ENCODE measurements at regions of chr9 and their contacts with region 1.

Region 1: DNA sequence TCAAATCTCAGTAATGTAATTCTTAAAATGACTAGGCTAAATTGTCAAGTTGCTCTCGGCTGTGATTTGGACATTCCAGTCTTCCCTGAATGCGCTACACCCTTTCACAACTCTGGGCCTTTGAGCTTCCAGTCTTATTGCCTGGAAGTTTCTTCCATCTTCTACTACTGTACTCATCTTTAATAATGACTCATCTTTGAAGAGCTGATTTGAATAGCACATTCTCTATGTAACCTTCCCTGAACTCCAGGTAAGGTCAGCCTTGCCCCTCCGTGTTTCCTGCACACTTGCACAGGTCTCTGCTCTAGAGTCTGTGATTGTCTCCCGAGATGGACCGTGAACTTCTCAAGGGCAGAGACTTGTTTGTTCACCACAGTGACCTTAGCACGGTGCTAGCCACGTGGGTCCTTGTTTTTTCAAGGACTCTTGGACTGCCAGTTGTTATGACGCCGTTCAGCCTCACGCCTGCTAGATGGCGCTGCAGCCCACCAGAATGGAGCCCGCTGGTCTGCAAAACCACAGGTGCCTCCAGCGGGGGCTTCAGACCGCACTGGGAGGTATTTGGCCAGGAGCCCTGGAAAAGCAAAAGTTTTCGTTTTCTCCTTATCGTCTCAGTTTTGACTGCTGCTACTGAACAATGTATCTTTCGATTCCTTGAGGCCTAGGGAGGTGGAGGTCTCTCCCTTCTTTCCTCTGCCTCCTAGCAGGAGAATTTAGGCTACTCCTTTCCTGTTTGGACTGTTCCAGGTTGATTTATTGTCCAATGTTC is 44.4 kb downstream of the SEC61B start:
- DNase-seq: peak; percentile 77
- H3K4me3 ChIP-seq: no peak overlapping the region
- H3K27ac ChIP-seq: no peak overlapping the region
- H3K4me1 ChIP-seq: peaks cover 4% of the 10 kb centered on the region
- CTCF ChIP-seq: peak; percentile 94

Region 2: DNA sequence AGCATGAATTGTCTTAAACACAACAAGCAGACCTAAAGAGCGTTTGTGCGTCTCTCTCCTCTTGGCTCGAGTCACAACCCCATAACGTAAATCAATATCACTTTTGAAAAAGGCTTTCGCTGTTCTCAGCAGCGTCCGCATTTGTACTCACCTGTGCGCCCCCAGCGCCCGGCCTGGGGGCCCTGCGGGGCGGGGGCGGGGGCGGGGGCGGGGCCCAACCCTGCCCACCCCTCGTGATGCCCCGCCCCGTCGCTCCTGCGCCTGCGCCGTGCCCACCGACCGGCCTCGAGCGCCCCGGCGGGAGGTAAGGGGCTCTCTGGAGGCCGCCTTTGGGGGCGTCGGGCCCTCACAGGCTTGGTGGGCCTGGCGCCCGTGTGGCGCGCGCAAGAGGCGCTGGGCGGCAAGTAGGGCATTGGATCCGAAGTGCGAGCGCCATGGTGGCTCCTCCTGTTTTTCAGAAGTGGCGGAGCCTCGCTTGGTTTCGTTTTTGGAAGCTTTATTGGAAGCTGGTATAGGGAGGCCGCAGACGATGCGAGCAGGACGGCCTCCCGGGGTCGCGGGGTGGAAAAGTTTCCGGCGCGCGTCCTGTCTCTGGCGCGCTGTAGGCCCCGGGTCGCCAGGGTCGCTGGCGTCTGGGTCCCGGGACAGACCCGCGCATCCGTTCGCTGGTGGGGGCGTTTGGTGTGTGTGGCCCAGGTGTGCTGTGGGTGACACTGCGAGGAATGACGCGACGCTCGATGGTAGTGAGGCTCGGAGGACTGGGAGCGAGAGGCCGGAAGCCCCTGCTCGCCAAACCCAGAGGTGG is 640.2 kb after region 1 on chr9 and contains the start of gene STX17:
- CTCF ChIA-PET with region 1: no interaction called
- POLR2A ChIA-PET with region 1: no interaction called
- intact Hi-C with region 1: no loop called
- DNase-seq: peak; percentile 84
- H3K4me3 ChIP-seq: peak within 1 kb of the TSS; percentile 85
- H3K27ac ChIP-seq: peak within 1 kb of the TSS; percentile 52
- H3K4me1 ChIP-seq: peaks cover 8% of the 10 kb centered on the region
- CTCF ChIP-seq: peak; percentile 32; the same call in 1 of the 2 replicates
- total RNA-seq, gene STX17: 12.1 and 12.4 TPM in 2 replicates

Region 3: GRCh38 chr9:99999797-100000196 is 733.4 kb after region 1 on chr9:
- CTCF ChIA-PET with region 1: no interaction called
- POLR2A ChIA-PET with region 1: no interaction called
- intact Hi-C with region 1: loop called (anchors 10 kb)
- DNase-seq: no peak
- H3K4me3 ChIP-seq: no peak overlapping the region
- H3K27ac ChIP-seq: no peak overlapping the region
- H3K4me1 ChIP-seq: no peaks in the 10 kb centered on the region
- CTCF ChIP-seq: no peak

Region 4: GRCh38 chr9:100679834-100680233 is 1413.4 kb after region 1 on chr9:
- CTCF ChIA-PET with region 1: no interaction called
- POLR2A ChIA-PET with region 1: no interaction called
- intact Hi-C with region 1: no loop called
- DNase-seq: no peak
- H3K4me3 ChIP-seq: no peak overlapping the region
- H3K27ac ChIP-seq: no peak overlapping the region
- H3K4me1 ChIP-seq: no peaks in the 10 kb centered on the region
- CTCF ChIP-seq: no peak